ENCODE measurements at regions of chr16 and their contacts with region 1.

Region 1: GRCh38 chr16:2500918-2501750 is 12.6 kb upstream of the ATP6V0C start:
- DNase-seq: peak; percentile 60
- H3K4me3 ChIP-seq: peak overlapping the region; percentile 36
- H3K27ac ChIP-seq: no peak overlapping the region
- H3K27me3 ChIP-seq: no peaks in the 10 kb centered on the region
- CTCF ChIP-seq: peak; percentile 96

Region 2: DNA sequence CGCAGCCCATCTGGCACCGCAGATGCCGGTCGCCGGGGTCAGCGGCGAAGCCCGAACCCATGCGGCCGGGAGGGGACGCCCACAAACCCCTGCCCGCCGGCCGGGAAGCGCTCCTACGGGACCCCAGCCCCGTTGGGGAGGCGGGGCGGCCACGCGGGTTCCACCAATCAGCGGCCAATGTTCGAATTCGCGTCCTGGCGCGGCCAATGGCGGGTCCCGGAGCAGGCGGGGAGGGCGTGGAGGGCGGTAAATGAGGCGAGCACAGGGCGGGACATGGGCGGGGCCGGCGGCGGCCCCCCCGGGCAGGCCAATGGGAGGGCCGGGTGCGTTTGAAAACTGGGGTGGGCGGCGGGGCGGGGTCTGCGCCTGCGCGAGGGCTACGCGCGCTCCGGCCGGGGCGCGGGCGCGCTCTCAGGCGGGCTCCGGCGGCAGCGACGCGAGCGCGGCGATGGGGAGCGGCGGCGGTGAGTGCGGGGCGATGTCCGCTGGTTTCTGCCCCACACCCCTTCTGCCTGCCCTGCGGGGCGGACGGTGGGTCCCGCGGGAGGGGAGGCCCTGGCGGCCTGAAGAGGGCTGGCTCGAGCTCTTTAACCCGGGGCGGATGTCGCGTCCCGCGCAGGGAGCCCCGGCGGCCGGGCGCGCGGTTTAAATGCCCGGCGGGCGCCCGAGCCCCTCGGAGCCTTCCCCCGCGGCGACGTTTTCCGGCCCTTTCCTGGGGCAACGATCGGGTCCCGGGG is 71.9 kb before region 1 on chr16 and contains the start of gene CCNF:
- CTCF ChIA-PET with region 1: interaction called, 16 read pairs
- POLR2A ChIA-PET with region 1: interaction called, 4 read pairs
- DNase-seq: peak; percentile 75
- H3K4me3 ChIP-seq: peak within 1 kb of the TSS; percentile 78
- H3K27ac ChIP-seq: peak within 1 kb of the TSS; percentile 21
- H3K27me3 ChIP-seq: no peaks in the 10 kb centered on the region
- CTCF ChIP-seq: no peak
- polyA plus RNA-seq, gene CCNF: 2.3 and 2.5 TPM in 2 replicates

Region 3: GRCh38 chr16:2474877-2475412 is 26.2 kb before region 1 on chr16 and contains the start of gene TBC1D24:
- CTCF ChIA-PET with region 1: interaction called, 7 read pairs
- POLR2A ChIA-PET with region 1: interaction called, 10 read pairs
- DNase-seq: no peak
- H3K4me3 ChIP-seq: peak within 1 kb of the TSS; percentile 79
- H3K27ac ChIP-seq: no peak within 1 kb of the TSS
- H3K27me3 ChIP-seq: no peaks in the 10 kb centered on the region
- CTCF ChIP-seq: no peak
- polyA plus RNA-seq, gene TBC1D24: 6.0 and 6.4 TPM in 2 replicates

Region 4: DNA sequence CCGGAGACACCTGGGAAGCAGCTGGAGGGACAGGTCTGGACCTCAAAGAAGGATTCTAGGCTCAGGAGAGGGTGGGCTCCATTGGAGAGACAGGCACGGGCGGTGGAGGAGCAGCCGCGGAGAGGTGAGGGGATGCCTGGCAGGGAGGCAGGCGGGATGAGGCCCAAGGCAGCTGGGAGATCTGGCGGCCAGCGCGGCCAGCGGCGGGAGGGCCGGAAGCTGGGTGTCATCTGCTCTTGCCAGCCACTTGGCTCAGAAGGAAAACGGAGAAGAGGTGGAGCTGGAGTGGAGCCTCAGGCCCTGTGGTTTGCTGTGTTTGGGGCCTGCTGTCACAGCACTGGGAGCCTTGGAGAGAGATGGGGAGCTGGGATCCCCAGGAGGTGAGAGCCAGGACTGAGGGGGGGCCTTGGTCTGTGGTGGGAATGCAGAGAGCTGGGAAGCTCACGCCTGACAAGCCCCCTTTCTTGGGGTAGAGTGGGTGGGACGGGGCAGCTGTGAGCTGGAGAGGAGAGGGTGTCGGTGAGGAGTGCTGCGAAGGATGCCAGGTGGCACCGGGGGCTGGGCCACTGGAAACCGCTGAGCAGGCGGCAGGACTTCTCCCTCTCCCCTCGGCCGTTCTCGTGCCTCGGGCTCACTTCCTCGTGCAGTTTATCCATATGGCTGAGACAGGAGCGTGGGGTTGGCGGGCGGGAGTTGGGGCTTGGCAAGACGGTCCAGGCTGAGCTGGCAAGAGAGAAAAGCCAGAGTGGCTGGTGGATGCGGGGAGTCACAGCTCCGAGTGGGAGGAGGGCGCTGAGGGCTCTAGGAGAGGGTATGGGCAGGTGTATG is 18.2 kb before region 1 on chr16:
- CTCF ChIA-PET with region 1: interaction called, 30 read pairs
- POLR2A ChIA-PET with region 1: no interaction called
- DNase-seq: no peak
- H3K4me3 ChIP-seq: peak overlapping the region; percentile 33
- H3K27ac ChIP-seq: peak overlapping the region; percentile 68
- H3K27me3 ChIP-seq: no peaks in the 10 kb centered on the region
- CTCF ChIP-seq: no peak

Region 5: GRCh38 chr16:2487903-2488531 is 13.1 kb before region 1 on chr16:
- CTCF ChIA-PET with region 1: interaction called, 30 read pairs
- POLR2A ChIA-PET with region 1: no interaction called
- DNase-seq: no peak
- H3K4me3 ChIP-seq: no peak overlapping the region
- H3K27ac ChIP-seq: no peak overlapping the region
- H3K27me3 ChIP-seq: no peaks in the 10 kb centered on the region
- CTCF ChIP-seq: no peak

Region 6: DNA sequence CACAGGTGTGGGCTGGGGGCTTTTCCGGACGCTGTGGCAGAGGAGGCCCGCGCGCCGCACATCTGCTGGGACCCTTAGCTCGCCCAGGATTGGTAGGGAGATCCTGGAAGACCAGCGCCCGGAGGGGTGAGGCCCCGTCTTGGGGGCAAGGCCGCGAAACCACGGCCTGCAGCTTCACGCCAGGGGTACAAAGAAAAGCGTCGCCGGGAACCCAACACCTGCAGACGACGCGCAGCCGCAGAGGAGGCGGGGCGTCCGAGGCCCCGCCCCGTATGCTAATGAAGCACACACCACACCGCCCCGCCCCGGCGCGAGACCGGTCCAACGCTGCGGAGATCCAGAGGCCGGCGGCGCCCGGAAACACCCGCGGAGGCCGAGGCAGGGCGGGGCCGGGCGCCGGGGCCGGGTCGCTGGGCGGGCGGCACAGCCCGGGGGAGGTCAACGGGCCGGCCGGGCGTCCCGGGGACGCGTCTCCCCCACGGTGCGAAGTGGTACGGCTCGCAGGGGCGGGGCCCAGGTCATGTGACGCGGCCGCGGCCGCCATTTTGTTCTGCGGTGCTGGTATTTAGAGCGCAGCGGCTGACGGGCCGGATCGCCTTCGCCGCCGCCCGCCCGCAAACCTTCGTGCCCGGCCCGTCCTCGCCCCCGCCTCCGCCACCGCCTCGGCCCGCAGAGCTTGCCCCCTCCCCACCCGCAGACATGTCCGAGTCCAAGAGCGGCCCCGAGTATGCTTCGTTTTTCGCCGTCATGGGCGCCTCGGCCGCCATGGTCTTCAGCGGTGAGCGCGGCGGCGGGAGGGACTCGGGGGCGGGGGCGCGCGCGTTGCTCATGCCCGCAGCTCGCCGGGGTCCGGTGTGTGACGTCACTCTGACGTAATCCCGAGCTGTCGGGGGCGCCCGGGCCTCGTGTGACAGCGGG is 12.5 kb after region 1 on chr16 and contains the start of gene ATP6V0C:
- CTCF ChIA-PET with region 1: interaction called, 20 read pairs
- POLR2A ChIA-PET with region 1: interaction called, 11 read pairs
- DNase-seq: peak; percentile 53
- H3K4me3 ChIP-seq: peak within 1 kb of the TSS; percentile 70
- H3K27ac ChIP-seq: peak within 1 kb of the TSS; percentile 68
- H3K27me3 ChIP-seq: no peaks in the 10 kb centered on the region
- CTCF ChIP-seq: no peak
- polyA plus RNA-seq, gene ATP6V0C: 11.0 and 19.9 TPM in 2 replicates

Measured in AG04450 (cell line).